Activated CD4-positive, alpha-beta T cell treated with anti-CD3 and anti-CD28 coated beads, Interleukin-2, amount 10 ng/mL, durations not matched to agents 24 days and 14 days (primary cell): ENCODE measurements at regions of chr7 and their contacts with region 1.

Region 1: GRCh38 chr7:127392566-127393367 is at the start of gene ZNF800:
- DNase-seq: peak; percentile 96
- H3K4me3 Mint-ChIP-seq: peak within 1 kb of the TSS; percentile 97
- H3K27ac Mint-ChIP-seq: peak within 1 kb of the TSS; percentile 98
- H3K4me1 Mint-ChIP-seq: peaks cover 49% of the 10 kb centered on the region
- H3K27me3 Mint-ChIP-seq: no peaks in the 10 kb centered on the region
- total RNA-seq, gene ZNF800: 40.9 and 42.2 TPM in 2 replicates

Region 2: DNA sequence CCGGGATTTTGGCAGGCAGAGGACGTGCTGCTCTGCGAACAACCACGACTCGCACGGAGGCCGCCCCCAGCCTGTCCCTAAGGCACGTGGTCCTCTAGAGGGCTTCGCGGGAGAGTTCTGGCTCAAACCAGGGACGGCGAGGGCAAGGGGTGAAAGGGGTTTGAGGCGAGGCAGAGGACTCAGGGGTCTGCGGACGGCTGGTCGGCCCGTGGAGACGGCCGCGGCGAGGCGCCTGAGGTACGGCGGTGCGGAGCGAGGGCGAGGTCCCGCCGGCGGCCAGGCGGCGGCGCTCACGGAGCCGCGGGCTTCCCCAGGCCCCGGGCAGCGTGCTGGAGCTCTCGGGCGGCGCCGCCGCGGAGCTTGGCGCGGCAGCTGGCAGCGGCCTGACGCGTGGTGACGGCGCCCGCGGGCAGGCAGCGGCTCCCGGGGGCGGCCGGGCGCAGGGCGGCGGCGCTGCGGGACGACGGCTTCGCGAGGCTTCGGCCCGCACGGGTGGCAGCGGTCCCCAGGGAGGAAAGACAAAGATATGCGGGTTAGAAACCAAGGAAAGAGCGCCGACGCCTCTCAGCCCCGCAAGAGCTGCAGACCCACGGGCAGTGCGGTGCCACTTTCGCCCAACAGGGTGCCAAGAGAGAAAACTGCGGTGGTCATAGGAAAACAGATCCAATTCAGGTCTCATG is 45.1 kb before region 1 on chr7:
- intact Hi-C with region 1: loop called (anchors 5 kb)
- DNase-seq: peak; percentile 91
- H3K4me3 Mint-ChIP-seq: peak overlapping the region; percentile 43
- H3K27ac Mint-ChIP-seq: no peak overlapping the region
- H3K4me1 Mint-ChIP-seq: peaks cover 4% of the 10 kb centered on the region
- H3K27me3 Mint-ChIP-seq: peaks cover 15% of the 10 kb centered on the region

Region 3: GRCh38 chr7:127413962-127414361 is 21.2 kb after region 1 on chr7:
- intact Hi-C with region 1: loop called (anchors 1 kb)
- DNase-seq: peak; percentile 73
- H3K4me3 Mint-ChIP-seq: peak overlapping the region; percentile 67
- H3K27ac Mint-ChIP-seq: peak overlapping the region; percentile 42
- H3K4me1 Mint-ChIP-seq: peaks cover 42% of the 10 kb centered on the region
- H3K27me3 Mint-ChIP-seq: peaks cover 18% of the 10 kb centered on the region

Region 4: DNA sequence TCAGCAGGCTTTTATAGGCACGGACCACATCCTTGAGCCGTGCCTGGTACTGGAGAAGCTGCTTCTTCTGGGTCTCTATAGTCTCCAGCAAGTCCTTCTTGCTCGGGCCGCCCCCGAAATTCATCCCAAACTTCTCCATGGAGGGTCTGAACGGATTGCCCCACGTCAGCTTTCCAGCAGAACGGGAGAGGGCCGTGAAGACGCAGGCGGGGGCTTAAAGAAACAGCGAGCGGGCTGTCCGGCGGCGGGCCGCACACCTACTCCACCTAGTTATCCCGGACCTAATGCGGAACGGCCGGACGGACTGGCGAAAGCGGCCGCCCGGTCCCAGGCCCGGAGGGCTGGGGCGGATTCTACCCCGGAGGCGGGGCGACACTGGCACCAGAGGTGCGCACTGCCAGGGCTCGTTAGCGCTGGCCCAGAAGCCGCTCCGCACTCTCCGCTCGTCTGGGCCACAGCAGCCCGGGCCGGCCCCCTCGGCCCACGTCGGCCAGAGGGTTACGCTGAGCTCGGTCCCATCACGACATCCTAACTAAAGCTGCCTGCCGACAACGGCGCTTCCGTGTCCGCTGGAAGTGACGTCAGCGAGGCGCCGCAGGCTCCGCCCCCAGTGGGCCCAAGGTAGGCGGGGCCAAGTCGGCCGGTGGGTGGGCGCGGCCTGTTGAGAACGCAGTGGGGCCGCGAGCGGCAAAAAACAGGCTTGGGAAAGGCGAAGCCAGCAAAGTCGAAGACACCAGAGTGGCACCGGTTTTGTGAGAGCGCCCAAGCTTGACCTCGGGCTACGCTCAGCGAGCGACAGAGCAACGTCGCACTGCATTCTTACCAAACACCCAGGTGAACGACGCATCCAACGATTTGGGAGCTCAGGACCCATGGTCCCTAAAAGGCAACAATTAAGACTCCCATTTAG is 192.5 kb after region 1 on chr7 and contains the start of gene GCC1:
- intact Hi-C with region 1: loop called (anchors 1 kb)
- DNase-seq: peak; percentile 99
- H3K4me3 Mint-ChIP-seq: peak within 1 kb of the TSS; percentile 94
- H3K27ac Mint-ChIP-seq: peak within 1 kb of the TSS; percentile 89
- H3K4me1 Mint-ChIP-seq: peaks cover 43% of the 10 kb centered on the region
- H3K27me3 Mint-ChIP-seq: no peaks in the 10 kb centered on the region
- total RNA-seq, gene GCC1: 14.8 and 15.6 TPM in 2 replicates